ENCODE measurements at regions of chr6 and their contacts with region 1.

Region 1: DNA sequence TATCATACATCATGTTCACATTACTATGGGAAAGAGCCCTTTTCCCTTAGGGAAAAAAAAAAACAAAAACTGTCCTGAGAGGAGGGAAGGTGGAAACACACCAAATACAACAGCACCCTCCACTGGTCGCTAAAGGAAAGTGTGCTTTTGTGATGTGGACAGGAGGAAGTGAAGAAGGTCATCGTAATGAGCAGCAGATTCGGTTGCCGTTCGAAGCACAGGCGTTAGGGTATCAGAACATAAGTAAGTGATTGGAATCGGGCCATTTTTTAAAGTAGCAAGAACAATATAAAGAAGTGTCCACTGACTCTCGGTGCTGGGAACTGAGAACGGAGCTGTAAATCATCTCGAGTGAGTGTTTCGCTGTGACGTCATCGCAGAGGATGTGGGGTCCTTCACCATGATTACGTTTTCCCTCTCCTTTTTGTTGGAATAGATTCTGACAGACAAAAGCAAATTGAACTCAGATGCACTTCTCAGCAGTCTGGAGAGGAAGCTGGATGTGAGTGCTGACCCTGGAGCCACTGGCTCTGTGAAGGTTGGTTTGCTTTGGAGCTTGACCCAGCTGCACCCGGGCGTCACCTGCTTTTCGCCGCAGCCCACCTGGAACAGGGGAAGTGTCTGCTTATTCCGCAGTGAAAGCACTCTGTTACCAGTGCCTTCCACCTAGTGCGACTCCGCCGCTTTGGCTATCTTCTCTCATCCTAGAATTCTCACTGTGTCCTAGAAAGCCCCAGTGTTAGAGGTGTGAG is 203.6 kb upstream of the GMDS start:
- DNase-seq: peak; percentile 48 to 75
- ATAC-seq: peak; percentile 88 to 90
- H3K4me3 ChIP-seq: peak overlapping the region; percentile 37
- H3K27ac ChIP-seq: peak overlapping the region; percentile 41 to 64; a peak in 5 of 6 replicates
- H3K4me1 ChIP-seq: peaks cover 5% of the 10 kb centered on the region; the same call in 1 of the 3 replicates
- CTCF ChIP-seq: peak; percentile 61
- EP300 ChIP-seq: no peak
- POLR2A ChIP-seq: no peak
- RAD21 ChIP-seq: peak; percentile 75 to 80

Region 2: DNA sequence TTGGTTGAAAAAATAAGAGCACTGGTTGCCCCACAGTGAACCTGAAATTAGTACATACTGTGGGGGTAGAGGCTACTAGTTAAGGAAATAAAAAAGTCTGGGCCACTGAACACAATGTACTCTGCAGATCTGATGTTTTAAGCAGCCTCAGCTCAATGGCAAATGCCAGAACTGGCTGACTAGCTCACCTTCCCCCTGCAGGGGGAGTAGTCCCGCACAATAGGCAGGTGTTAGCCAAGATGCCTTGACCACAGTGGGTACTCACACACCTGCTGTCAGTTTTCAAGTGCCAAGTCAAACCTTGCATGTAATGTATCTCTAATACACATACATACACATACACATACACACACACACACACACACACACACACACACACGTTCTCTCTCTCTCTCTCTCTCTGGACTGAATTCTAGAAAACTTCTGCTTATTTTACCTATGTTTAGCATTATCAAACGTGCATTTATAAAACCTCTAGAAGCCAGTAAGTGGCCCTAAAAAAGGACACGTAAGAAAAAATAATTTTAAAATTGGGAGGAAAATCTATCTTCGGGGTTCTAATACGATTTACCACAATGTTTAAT is 239.7 kb before region 1 on chr6:
- CTCF ChIA-PET with region 1: interaction called, 11 read pairs
- POLR2A ChIA-PET with region 1: no interaction called
- DNase-seq: peak in 1 of 2 experiments; percentile 54
- ATAC-seq: peak; percentile 84 to 89
- H3K4me3 ChIP-seq: no peak overlapping the region
- H3K27ac ChIP-seq: no peak overlapping the region
- H3K4me1 ChIP-seq: no peaks in the 10 kb centered on the region
- CTCF ChIP-seq: peak; percentile 43
- EP300 ChIP-seq: no peak
- POLR2A ChIP-seq: no peak
- RAD21 ChIP-seq: peak; percentile 43 to 55; a peak in 4 of 5 replicates

Region 3: DNA sequence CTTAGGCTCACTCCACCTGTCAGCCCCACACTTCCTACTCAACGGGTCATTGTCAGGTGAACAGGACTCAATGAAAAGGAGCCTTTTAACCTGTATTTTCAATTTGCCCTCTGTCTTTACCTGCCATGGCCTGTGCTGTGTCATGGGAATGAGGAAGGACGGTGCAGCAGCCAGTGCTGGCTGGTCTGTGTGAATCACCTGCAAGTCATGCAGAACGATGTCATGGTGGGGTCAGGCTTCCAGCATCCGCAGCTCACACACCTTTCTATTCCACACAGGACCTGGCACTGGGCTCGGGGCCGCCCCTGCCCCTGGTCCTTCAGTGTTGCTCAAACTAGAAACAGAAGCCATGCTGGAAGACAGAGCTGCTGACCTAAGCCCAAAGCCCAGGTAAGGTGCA is 14.9 kb before region 1 on chr6:
- CTCF ChIA-PET with region 1: interaction called, 15 read pairs
- POLR2A ChIA-PET with region 1: no interaction called
- DNase-seq: no peak
- ATAC-seq: no peak
- H3K4me3 ChIP-seq: no peak overlapping the region
- H3K27ac ChIP-seq: no peak overlapping the region
- H3K4me1 ChIP-seq: peaks cover 15% of the 10 kb centered on the region
- CTCF ChIP-seq: no peak
- EP300 ChIP-seq: no peak
- POLR2A ChIP-seq: no peak
- RAD21 ChIP-seq: no peak

Measured in A549 (cell line).